ENCODE measurements at regions of chr3 and their contacts with region 1.

Region 1: DNA sequence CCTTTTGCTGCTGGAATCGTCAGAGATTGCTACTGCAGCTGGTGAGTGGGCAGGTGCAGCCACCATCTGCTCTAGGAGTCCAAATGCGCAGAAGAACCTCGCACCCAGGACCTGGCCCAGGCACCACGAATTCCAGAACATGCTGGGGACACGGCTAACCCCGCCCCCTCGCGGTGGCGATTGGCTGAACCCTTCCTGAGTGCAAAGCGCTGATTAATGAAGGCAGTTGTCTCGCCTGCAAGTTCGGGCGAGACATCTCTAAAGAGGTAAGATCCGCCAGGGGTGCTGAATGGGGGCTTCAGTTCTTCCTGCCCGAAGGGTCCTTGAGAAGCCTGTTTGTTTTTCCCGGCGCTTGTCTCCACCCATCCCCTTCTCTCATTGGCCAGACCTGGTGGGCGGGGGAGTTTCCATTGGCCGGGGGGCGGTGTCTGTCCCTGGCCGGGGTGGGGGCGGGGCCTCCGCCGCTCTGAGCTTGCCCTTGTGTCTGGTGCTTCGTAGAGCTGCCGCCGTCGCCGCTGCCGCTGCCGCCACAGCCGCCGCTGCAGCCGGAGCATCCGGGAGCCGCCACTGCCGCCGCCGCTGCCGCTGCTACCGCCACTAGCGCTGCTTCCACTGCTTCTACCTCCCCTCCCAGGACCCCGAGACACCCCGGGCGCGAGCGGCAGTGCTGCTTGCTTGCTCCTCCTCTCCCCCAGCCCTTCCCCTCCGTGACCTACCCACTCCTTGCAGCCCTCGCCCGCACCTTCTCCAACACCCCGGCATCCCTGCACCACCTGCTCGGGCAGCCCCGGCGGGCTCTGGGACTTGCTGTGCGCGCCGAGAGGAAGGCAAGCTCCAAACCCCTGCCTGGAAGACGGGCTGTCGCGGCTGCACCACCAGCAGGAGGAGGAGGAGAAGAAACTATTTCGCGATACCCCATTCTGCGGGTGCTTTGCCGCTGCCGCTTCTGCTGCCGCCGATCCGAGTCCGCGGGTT is at the start of gene CADM2:
- DNase-seq: peak; percentile 94
- ATAC-seq: peak; percentile 88
- H3K4me3 Mint-ChIP-seq: peak within 1 kb of the TSS; percentile 99
- H3K27ac Mint-ChIP-seq: peak within 1 kb of the TSS; percentile 99
- H3K4me1 Mint-ChIP-seq: peaks cover 42% of the 10 kb centered on the region
- H3K27me3 Mint-ChIP-seq: no peaks in the 10 kb centered on the region
- CTCF ChIP-seq: peak; percentile 39; the same call in 1 of the 2 replicates
- total RNA-seq, gene CADM2: 18.8 to 24.1 TPM (median 21.3 TPM) in 3 replicates

Region 2: GRCh38 chr3:84943379-84943778 is 15.4 kb before region 1 on chr3:
- CTCF ChIA-PET with region 1: interaction called, 11 read pairs
- POLR2A ChIA-PET with region 1: interaction called, 3 read pairs
- DNase-seq: no peak
- ATAC-seq: peak; percentile 83
- H3K4me3 Mint-ChIP-seq: no peak overlapping the region
- H3K27ac Mint-ChIP-seq: no peak overlapping the region
- H3K4me1 Mint-ChIP-seq: no peaks in the 10 kb centered on the region
- H3K27me3 Mint-ChIP-seq: no peaks in the 10 kb centered on the region; the same call in 1 of the 2 replicates
- CTCF ChIP-seq: peak; percentile 27; the same call in 1 of the 2 replicates